Activated T-helper 1 cell treated with anti-CD3 and anti-CD28 coated beads, Interleukin-12 subunit alpha, Interleukin-12 subunit beta, Interleukin-2, Interleukin-4 antibody, amounts not matched to agents 30 ng/mL and 10 ng/mL and 1 ng/mL, durations not matched to agents 14 hours and 24 hours and 36 hours (primary cell): ENCODE measurements at regions of chr12 and their contacts with region 1.

Region 1: GRCh38 chr12:6914246-6914946 is at the start of gene ENO2:
- DNase-seq: peak; percentile 77
- H3K4me3 Mint-ChIP-seq: peak within 1 kb of the TSS; percentile 96
- H3K27ac Mint-ChIP-seq: peak within 1 kb of the TSS; percentile 88
- H3K4me1 Mint-ChIP-seq: peaks cover 52% of the 10 kb centered on the region
- H3K27me3 Mint-ChIP-seq: no peaks in the 10 kb centered on the region
- total RNA-seq, gene ENO2: 147 and 156 TPM in 2 replicates

Region 2: GRCh38 chr12:6313326-6313940 is 601.0 kb before region 1 on chr12:
- intact Hi-C with region 1: no loop called
- DNase-seq: no peak
- H3K4me3 Mint-ChIP-seq: no peak overlapping the region
- H3K27ac Mint-ChIP-seq: no peak overlapping the region
- H3K4me1 Mint-ChIP-seq: peaks cover 21% of the 10 kb centered on the region
- H3K27me3 Mint-ChIP-seq: peaks cover 22% of the 10 kb centered on the region

Region 3: DNA sequence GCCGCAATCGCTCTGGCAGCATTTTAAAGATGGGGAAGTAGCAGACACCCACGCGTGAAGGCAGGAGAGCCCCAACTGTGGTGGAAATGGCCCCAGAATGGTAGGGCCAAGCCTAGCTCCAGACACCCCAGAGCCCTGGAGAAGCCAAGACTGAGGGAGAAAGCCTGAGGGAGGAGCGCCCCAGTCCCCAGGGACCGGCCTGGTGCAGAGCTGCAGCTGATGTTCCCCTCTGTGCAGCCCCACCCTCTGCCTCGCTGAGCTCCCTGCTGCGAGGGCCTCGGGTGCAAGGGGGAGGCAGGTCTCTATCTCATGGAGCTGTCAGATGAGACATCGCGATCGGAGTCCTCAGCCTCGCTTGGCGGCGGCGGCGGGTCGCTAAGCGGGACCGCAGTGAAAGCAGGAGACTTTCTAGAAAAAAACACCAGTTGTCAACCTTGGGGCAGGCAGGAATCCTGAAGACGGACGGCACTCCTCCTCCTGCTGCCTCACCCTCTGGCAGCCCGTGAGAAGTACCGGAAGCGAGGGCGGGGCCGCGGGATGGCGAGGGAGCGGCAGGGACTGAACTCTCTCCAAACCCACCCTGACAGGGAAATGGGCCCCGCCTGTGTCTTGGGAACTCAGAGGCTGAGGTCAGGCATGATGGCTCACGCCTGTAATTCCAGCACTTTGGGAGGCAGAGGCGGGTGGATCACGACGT is 374.1 kb before region 1 on chr12:
- intact Hi-C with region 1: no loop called
- DNase-seq: peak; percentile 54
- H3K4me3 Mint-ChIP-seq: peak overlapping the region; percentile 63
- H3K27ac Mint-ChIP-seq: peak overlapping the region; percentile 91
- H3K4me1 Mint-ChIP-seq: peaks cover 62% of the 10 kb centered on the region
- H3K27me3 Mint-ChIP-seq: no peaks in the 10 kb centered on the region

Region 4: DNA sequence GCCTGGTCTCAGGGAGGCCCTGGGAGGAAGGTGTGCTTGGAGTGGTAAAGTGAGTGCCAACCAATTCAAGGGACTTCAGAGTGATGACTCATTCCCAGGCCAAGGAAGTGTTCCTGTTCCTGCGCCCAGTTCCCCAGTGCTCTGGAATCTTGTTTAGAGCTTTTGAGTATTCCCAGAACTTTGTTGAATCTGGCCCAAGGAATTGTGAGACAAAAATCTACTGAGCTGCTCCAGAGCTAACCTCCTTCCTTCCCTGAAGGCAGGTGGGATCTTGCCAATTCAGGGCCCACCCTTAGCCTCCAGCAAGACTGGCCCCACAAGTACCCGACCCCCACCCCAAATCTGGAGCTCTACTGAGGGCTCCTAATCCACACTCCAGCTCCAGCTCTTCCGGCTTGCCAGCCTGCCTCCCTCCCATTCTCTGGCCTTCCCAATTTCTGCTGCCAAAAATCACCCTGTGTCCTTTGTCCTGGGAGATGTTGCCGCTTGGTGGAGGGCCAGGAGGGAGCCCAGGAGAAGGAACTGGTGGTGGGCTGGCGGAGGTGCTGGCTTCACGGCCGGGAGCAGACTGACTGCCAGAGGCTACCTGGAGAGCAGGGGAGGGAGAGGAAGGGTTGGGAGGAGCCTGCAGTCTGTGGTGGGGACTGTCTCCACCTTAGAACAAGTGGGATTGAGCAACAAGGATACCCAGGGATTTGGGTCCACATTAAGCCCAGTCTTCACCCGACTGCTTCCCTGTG is 11.3 kb after region 1 on chr12:
- intact Hi-C with region 1: loop called (anchors 1 kb)
- DNase-seq: no peak
- H3K4me3 Mint-ChIP-seq: peak overlapping the region; percentile 91
- H3K27ac Mint-ChIP-seq: peak overlapping the region; percentile 94
- H3K4me1 Mint-ChIP-seq: peaks cover 44% of the 10 kb centered on the region
- H3K27me3 Mint-ChIP-seq: peaks cover 3% of the 10 kb centered on the region